IMR-90 (cell line): ENCODE measurements at regions of chr10 and their contacts with region 1.

Region 1: GRCh38 chr10:13206546-13207443 is 27.4 kb downstream of the UCMA start:
- DNase-seq: peak; percentile 61
- ATAC-seq: peak; percentile 65; the same call in 1 of the 2 replicates
- H3K4me3 ChIP-seq: no peak overlapping the region
- H3K27ac ChIP-seq: no peak overlapping the region
- H3K4me1 ChIP-seq: no peaks in the 10 kb centered on the region
- H3K27me3 ChIP-seq: no peaks in the 10 kb centered on the region
- CTCF ChIP-seq: peak; percentile 63
- POLR2A ChIP-seq: no peak
- RAD21 ChIP-seq: peak; percentile 39

Region 2: DNA sequence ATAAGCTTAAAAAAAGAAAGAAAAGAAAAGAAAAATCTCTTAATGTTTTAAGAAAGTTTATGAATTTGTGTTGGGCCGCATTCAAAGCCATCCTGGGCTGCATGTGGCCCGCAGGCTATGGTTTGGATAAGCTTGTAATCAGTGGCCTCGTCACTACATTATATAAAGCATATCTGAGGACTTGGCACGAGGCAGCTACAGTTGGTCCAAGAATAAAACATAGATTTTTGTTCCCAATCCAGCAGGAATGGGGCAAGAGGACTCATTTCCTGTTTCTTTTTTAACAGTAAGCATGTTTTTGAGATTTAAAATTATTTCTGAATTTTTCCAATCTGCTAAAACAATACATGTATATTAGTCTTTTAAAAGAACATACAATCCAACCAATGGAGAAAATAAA is 16.8 kb before region 1 on chr10:
- CTCF ChIA-PET with region 1: no interaction called
- POLR2A ChIA-PET with region 1: no interaction called
- dilution Hi-C with region 1: no loop called
- in situ Hi-C with region 1: no loop called
- intact Hi-C with region 1: no loop called
- DNase-seq: peak; percentile 48
- ATAC-seq: peak; percentile 35
- H3K4me3 ChIP-seq: no peak overlapping the region
- H3K27ac ChIP-seq: no peak overlapping the region
- H3K4me1 ChIP-seq: no peaks in the 10 kb centered on the region
- H3K27me3 ChIP-seq: no peaks in the 10 kb centered on the region
- CTCF ChIP-seq: no peak
- POLR2A ChIP-seq: no peak
- RAD21 ChIP-seq: no peak

Region 3: GRCh38 chr10:13276749-13277365 is 70.1 kb after region 1 on chr10:
- CTCF ChIA-PET with region 1: no interaction called
- POLR2A ChIA-PET with region 1: no interaction called
- dilution Hi-C with region 1: no loop called
- in situ Hi-C with region 1: no loop called
- intact Hi-C with region 1: loop called (anchors 2 kb)
- DNase-seq: peak; percentile 41
- ATAC-seq: peak; percentile 42; the same call in 1 of the 2 replicates
- H3K4me3 ChIP-seq: no peak overlapping the region
- H3K27ac ChIP-seq: no peak overlapping the region
- H3K4me1 ChIP-seq: peaks cover 3% of the 10 kb centered on the region; the same call in 1 of the 2 replicates
- H3K27me3 ChIP-seq: no peaks in the 10 kb centered on the region
- CTCF ChIP-seq: peak; percentile 39
- POLR2A ChIP-seq: no peak
- RAD21 ChIP-seq: peak; percentile 33; the same call in 1 of the 2 replicates

Region 4: GRCh38 chr10:13299437-13300287 is 92.9 kb after region 1 on chr10 and contains the start of gene PHYH:
- CTCF ChIA-PET with region 1: interaction called, 8 read pairs
- POLR2A ChIA-PET with region 1: interaction called, 3 read pairs
- dilution Hi-C with region 1: no loop called
- in situ Hi-C with region 1: loop called (anchors 10 kb)
- intact Hi-C with region 1: loop called (anchors 1 kb)
- DNase-seq: peak; percentile 74
- ATAC-seq: peak; percentile 89
- H3K4me3 ChIP-seq: peak within 1 kb of the TSS; percentile 42
- H3K27ac ChIP-seq: peak within 1 kb of the TSS; percentile 64
- H3K4me1 ChIP-seq: peaks cover 5% of the 10 kb centered on the region; the same call in 1 of the 2 replicates
- H3K27me3 ChIP-seq: no peaks in the 10 kb centered on the region
- CTCF ChIP-seq: no peak
- POLR2A ChIP-seq: peak; percentile 51; the same call in 1 of the 2 replicates
- RAD21 ChIP-seq: no peak
- total RNA-seq, gene PHYH: 9.7 and 10.9 TPM in 2 replicates

Region 5: GRCh38 chr10:13340626-13341376 is 134.0 kb after region 1 on chr10:
- CTCF ChIA-PET with region 1: no interaction called
- POLR2A ChIA-PET with region 1: no interaction called
- dilution Hi-C with region 1: no loop called
- in situ Hi-C with region 1: no loop called
- intact Hi-C with region 1: no loop called
- DNase-seq: no peak
- ATAC-seq: no peak
- H3K4me3 ChIP-seq: no peak overlapping the region
- H3K27ac ChIP-seq: no peak overlapping the region
- H3K4me1 ChIP-seq: peaks cover 4% of the 10 kb centered on the region; the same call in 1 of the 2 replicates
- H3K27me3 ChIP-seq: no peaks in the 10 kb centered on the region
- CTCF ChIP-seq: no peak
- POLR2A ChIP-seq: no peak
- RAD21 ChIP-seq: no peak